HEK293 (cell line): ENCODE measurements at regions of chr2 and their contacts with region 1.

Region 1: GRCh38 chr2:143697744-143698143 is 568.5 kb downstream of the ARHGAP15 start:
- H3K4me3 ChIP-seq: no peak overlapping the region
- H3K27ac ChIP-seq: no peak overlapping the region
- H3K4me1 ChIP-seq: peaks cover 8% of the 10 kb centered on the region; the same call in 1 of the 2 replicates
- CTCF ChIP-seq: no peak

Region 2: GRCh38 chr2:143675021-143675420 is 22.7 kb before region 1 on chr2:
- CTCF ChIA-PET with region 1: no interaction called
- POLR2A ChIA-PET with region 1: no interaction called
- H3K4me3 ChIP-seq: no peak overlapping the region
- H3K27ac ChIP-seq: no peak overlapping the region
- H3K4me1 ChIP-seq: no peaks in the 10 kb centered on the region
- CTCF ChIP-seq: no peak

Region 3: GRCh38 chr2:143686585-143687164 is 11.1 kb before region 1 on chr2:
- CTCF ChIA-PET with region 1: interaction called, 11 read pairs
- POLR2A ChIA-PET with region 1: no interaction called
- H3K4me3 ChIP-seq: no peak overlapping the region
- H3K27ac ChIP-seq: no peak overlapping the region
- H3K4me1 ChIP-seq: no peaks in the 10 kb centered on the region
- CTCF ChIP-seq: no peak

Region 4: GRCh38 chr2:143994961-143995360 is 297.2 kb after region 1 on chr2:
- CTCF ChIA-PET with region 1: no interaction called
- POLR2A ChIA-PET with region 1: no interaction called
- H3K4me3 ChIP-seq: no peak overlapping the region
- H3K27ac ChIP-seq: no peak overlapping the region
- H3K4me1 ChIP-seq: peaks cover 2% of the 10 kb centered on the region; the same call in 1 of the 2 replicates
- CTCF ChIP-seq: no peak